ENCODE measurements at regions of chr15 and their contacts with region 1.

Region 1: GRCh38 chr15:89893696-89894455 is at the start of gene AP3S2:
- DNase-seq: peak; percentile 96
- ATAC-seq: peak; percentile 82
- H3K4me3 Mint-ChIP-seq: peak within 1 kb of the TSS; percentile 98
- H3K27ac Mint-ChIP-seq: peak within 1 kb of the TSS; percentile 97
- H3K4me1 Mint-ChIP-seq: peaks cover 43% of the 10 kb centered on the region
- H3K27me3 Mint-ChIP-seq: no peaks in the 10 kb centered on the region
- total RNA-seq, gene AP3S2: 12.4 to 15.3 TPM

Region 2: DNA sequence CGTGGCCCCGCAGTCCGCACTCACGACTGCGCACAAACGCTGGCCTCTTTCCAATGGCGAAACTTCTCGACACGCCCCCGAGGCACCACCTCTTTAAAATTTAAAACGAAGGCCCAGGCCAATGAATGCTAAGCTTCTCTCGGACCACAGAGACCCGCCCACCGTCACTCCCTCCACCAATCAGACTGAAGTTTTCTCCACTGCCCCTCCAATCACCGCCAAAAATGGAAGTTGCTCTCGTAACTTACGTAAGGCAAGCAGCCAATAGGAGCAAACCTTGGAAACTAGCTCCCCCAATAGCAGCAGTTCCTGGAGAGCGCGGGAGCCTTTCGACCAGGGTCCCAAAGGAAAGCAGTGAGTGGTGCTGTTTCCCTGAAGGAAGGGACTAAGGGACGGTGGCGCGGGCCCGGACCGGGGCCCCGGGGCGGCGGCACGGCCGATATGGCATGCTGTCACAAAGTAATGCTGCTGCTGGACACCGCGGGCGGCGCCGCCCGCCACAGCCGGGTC is 318.7 kb before region 1 on chr15 and contains the start of gene TICRR:
- CTCF ChIA-PET with region 1: no interaction called
- POLR2A ChIA-PET with region 1: no interaction called
- intact Hi-C with region 1: loop called in 1 of 2 experiments (anchors 2 kb)
- DNase-seq: peak; percentile 96
- ATAC-seq: peak; percentile 99
- H3K4me3 Mint-ChIP-seq: peak within 1 kb of the TSS; percentile 89
- H3K27ac Mint-ChIP-seq: peak within 1 kb of the TSS; percentile 72
- H3K4me1 Mint-ChIP-seq: peaks cover 26% of the 10 kb centered on the region
- H3K27me3 Mint-ChIP-seq: peaks cover 5% of the 10 kb centered on the region
- total RNA-seq, gene TICRR: 25.7 to 28.9 TPM

Region 3: GRCh38 chr15:89874926-89875564 is 18.8 kb before region 1 on chr15:
- CTCF ChIA-PET with region 1: interaction called, 51 read pairs
- POLR2A ChIA-PET with region 1: interaction called, 3 read pairs
- intact Hi-C with region 1: no loop called
- DNase-seq: peak; percentile 92
- ATAC-seq: peak; percentile 100
- H3K4me3 Mint-ChIP-seq: no peak overlapping the region
- H3K27ac Mint-ChIP-seq: peak overlapping the region; percentile 51
- H3K4me1 Mint-ChIP-seq: peaks cover 4% of the 10 kb centered on the region
- H3K27me3 Mint-ChIP-seq: no peaks in the 10 kb centered on the region

Region 4: DNA sequence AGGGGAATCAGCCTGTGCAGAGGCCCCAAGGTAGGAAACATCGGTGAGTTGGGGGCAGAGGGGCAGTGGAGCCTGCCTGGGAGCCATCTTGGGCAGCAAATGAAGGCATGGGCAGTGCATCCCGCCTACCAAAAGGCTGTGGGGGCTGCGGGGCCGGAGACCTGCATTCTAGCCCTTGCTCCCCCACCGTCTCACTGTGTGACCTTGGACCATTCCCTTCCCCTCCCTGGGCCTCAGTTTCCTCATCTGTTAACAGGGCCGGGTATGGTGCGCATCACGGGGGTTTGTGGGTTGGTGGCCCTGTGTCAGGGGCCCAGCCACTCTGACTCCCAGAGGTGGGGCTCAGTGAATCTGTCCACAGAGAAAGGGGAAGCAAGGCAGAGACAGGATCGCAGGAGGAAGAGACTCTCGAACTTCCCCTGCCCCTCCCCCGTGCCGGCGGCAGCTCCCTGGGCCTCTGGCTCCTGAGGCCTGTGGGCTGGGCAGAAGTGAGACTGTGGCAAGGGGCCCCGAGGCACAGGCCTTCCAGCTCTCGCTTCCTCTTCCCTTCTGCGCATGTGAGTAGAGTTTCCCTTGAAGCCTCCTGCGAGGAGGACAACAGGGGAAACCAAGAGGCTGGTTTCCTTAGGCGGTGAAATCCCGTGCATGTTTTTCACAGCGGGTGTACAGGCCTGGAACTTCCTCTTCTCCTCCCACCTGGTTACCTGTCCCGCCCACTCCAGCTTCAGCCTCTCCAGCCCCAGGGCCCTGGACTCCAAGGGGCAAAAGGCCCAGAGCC is 165.5 kb after region 1 on chr15:
- CTCF ChIA-PET with region 1: interaction called, 3 read pairs
- POLR2A ChIA-PET with region 1: interaction called, 5 read pairs
- intact Hi-C with region 1: loop called in 1 of 2 experiments (anchors 1 kb)
- DNase-seq: peak; percentile 90
- ATAC-seq: peak; percentile 92
- H3K4me3 Mint-ChIP-seq: peak overlapping the region; percentile 46
- H3K27ac Mint-ChIP-seq: peak overlapping the region; percentile 94
- H3K4me1 Mint-ChIP-seq: peaks cover 58% of the 10 kb centered on the region
- H3K27me3 Mint-ChIP-seq: no peaks in the 10 kb centered on the region

Region 5: GRCh38 chr15:90101969-90102890 is 208.4 kb after region 1 on chr15 and contains the start of gene IDH2:
- CTCF ChIA-PET with region 1: interaction called, 7 read pairs
- POLR2A ChIA-PET with region 1: interaction called, 5 read pairs
- intact Hi-C with region 1: loop called (anchors 1 kb)
- DNase-seq: peak; percentile 85
- ATAC-seq: peak; percentile 73
- H3K4me3 Mint-ChIP-seq: peak within 1 kb of the TSS; percentile 86
- H3K27ac Mint-ChIP-seq: peak within 1 kb of the TSS; percentile 90
- H3K4me1 Mint-ChIP-seq: peaks cover 47% of the 10 kb centered on the region
- H3K27me3 Mint-ChIP-seq: no peaks in the 10 kb centered on the region
- total RNA-seq, gene IDH2: 176 to 182 TPM

Measured in activated CD4-positive, alpha-beta T cell treated with anti-CD3 and anti-CD28 coated beads for 36 hours (primary cell).